ENCODE measurements at regions of chr15 and their contacts with region 1.

Region 1: GRCh38 chr15:40952901-40953712 is at the start of gene CHAC1:
- DNase-seq: peak; percentile 97
- ATAC-seq: peak; percentile 91
- H3K4me3 ChIP-seq: peak within 1 kb of the TSS; percentile 79
- H3K27ac ChIP-seq: peak within 1 kb of the TSS; percentile 35
- H3K4me1 ChIP-seq: peaks cover 16% of the 10 kb centered on the region
- H3K27me3 ChIP-seq: no peaks in the 10 kb centered on the region
- CTCF ChIP-seq: no peak
- total RNA-seq, gene CHAC1: 6.2 and 13.3 TPM in 2 replicates

Region 2: DNA sequence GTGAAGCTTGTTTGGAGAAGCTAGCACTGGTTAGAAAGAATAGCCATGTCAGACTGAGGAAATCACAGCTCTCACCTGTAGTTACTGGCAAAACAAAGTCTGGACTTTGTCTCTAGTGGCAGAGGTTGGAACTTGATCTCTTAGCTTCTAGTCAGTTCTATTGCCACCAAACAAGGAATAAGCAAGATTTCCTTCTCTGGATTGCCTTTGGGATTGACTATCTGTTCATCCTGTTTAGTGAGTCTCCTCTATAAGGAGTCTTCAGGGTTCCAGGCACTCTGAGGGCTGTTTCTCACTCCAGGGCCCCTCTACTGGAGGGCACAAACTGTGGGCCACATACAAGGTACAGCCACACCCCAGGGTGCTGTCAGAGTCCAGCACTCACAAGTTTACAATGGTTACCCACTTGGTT is 1798.9 kb before region 1 on chr15:
- CTCF ChIA-PET with region 1: no interaction called
- POLR2A ChIA-PET with region 1: interaction called, 21 read pairs
- intact Hi-C with region 1: no loop called
- DNase-seq: peak; percentile 45
- ATAC-seq: peak; percentile 39
- H3K4me3 ChIP-seq: peak overlapping the region; percentile 38; the same call in 1 of the 2 replicates
- H3K27ac ChIP-seq: peak overlapping the region; percentile 54
- H3K4me1 ChIP-seq: peaks cover 29% of the 10 kb centered on the region
- H3K27me3 ChIP-seq: no peaks in the 10 kb centered on the region
- CTCF ChIP-seq: peak; percentile 43; the same call in 1 of the 2 replicates

Region 3: GRCh38 chr15:40941528-40942336 is 11.4 kb before region 1 on chr15:
- CTCF ChIA-PET with region 1: interaction called, 10 read pairs
- POLR2A ChIA-PET with region 1: interaction called, 3 read pairs
- intact Hi-C with region 1: no loop called
- DNase-seq: peak; percentile 84
- ATAC-seq: peak; percentile 78
- H3K4me3 ChIP-seq: peak overlapping the region; percentile 71
- H3K27ac ChIP-seq: peak overlapping the region; percentile 58
- H3K4me1 ChIP-seq: peaks cover 29% of the 10 kb centered on the region
- H3K27me3 ChIP-seq: no peaks in the 10 kb centered on the region
- CTCF ChIP-seq: peak; percentile 43

Region 4: GRCh38 chr15:40974879-40975278 is 21.8 kb after region 1 on chr15:
- CTCF ChIA-PET with region 1: no interaction called
- POLR2A ChIA-PET with region 1: no interaction called
- intact Hi-C with region 1: loop called (anchors 2 kb)
- DNase-seq: no peak
- ATAC-seq: no peak
- H3K4me3 ChIP-seq: no peak overlapping the region
- H3K27ac ChIP-seq: no peak overlapping the region
- H3K4me1 ChIP-seq: peaks cover 25% of the 10 kb centered on the region
- H3K27me3 ChIP-seq: no peaks in the 10 kb centered on the region
- CTCF ChIP-seq: no peak

Region 5: GRCh38 chr15:40984963-40985362 is 31.9 kb after region 1 on chr15:
- CTCF ChIA-PET with region 1: no interaction called
- POLR2A ChIA-PET with region 1: no interaction called
- intact Hi-C with region 1: no loop called
- DNase-seq: no peak
- ATAC-seq: no peak
- H3K4me3 ChIP-seq: no peak overlapping the region
- H3K27ac ChIP-seq: no peak overlapping the region
- H3K4me1 ChIP-seq: no peaks in the 10 kb centered on the region
- H3K27me3 ChIP-seq: no peaks in the 10 kb centered on the region
- CTCF ChIP-seq: no peak

Region 6: DNA sequence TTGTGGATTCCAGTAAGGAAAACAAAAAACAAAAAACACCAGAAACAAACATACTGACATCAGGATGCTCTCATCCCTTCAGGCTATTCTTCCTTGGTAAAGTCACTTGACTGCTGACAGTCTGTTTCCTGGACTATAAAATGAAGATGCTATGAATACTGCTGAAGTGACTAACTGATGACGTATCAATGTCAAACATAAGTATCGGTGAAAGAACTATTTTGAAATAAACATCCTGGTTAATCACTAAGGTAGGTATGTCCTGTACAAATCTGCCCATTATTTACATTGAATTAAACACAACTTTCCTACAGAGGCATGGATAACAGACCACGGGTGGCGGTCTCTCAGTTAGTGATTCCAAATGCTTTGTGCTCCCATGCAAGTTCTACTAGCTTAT is 46.1 kb after region 1 on chr15:
- CTCF ChIA-PET with region 1: no interaction called
- POLR2A ChIA-PET with region 1: no interaction called
- intact Hi-C with region 1: loop called (anchors 5 kb)
- DNase-seq: peak; percentile 96
- ATAC-seq: peak; percentile 84
- H3K4me3 ChIP-seq: 0 out of 2 replicates have a peak overlapping the region, but pooled peaks have one; percentile 4
- H3K27ac ChIP-seq: peak overlapping the region; percentile 95
- H3K4me1 ChIP-seq: peaks cover 43% of the 10 kb centered on the region
- H3K27me3 ChIP-seq: no peaks in the 10 kb centered on the region
- CTCF ChIP-seq: no peak

Region 7: GRCh38 chr15:41013698-41014414 is 60.7 kb after region 1 on chr15:
- CTCF ChIA-PET with region 1: no interaction called
- POLR2A ChIA-PET with region 1: no interaction called
- intact Hi-C with region 1: no loop called
- DNase-seq: no peak
- ATAC-seq: no peak
- H3K4me3 ChIP-seq: no peak overlapping the region
- H3K27ac ChIP-seq: no peak overlapping the region
- H3K4me1 ChIP-seq: peaks cover 11% of the 10 kb centered on the region
- H3K27me3 ChIP-seq: no peaks in the 10 kb centered on the region
- CTCF ChIP-seq: no peak

Region 8: DNA sequence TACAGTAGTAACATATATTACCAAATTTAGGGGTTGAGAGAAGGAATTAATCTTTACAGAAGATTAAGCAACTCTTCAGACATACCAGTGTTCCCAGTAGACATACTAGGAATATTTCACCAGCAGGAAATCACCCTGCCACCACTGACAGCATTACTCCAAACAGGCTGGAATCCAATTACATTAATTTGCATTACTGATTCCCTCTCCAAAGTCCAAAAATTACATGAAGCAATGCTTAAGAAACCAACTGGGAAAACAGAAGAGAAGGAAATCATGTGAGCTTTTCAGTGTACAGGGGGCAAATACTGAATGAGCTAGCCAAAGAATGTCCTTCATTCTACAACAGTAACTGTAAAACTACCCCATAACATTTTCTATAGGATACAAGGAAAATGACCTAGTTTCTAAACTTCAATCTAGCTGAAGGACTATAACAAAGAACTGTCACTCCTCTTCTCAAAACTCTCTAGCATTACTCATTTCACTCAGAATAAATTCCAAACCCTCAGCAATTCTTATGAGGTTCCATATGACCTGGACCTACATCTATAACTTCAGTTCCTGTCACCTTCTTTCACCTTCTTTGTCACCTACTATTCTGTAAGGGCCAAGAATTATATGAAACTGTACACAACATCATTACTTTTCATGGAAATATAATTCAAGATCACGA is 90.3 kb after region 1 on chr15:
- CTCF ChIA-PET with region 1: no interaction called
- POLR2A ChIA-PET with region 1: no interaction called
- intact Hi-C with region 1: no loop called
- DNase-seq: no peak
- ATAC-seq: no peak
- H3K4me3 ChIP-seq: no peak overlapping the region
- H3K27ac ChIP-seq: no peak overlapping the region
- H3K4me1 ChIP-seq: no peaks in the 10 kb centered on the region
- H3K27me3 ChIP-seq: no peaks in the 10 kb centered on the region
- CTCF ChIP-seq: no peak